Transverse colon (tissue), 4 donors: ENCODE measurements at regions of chr1 and their contacts with region 1.

Region 1: DNA sequence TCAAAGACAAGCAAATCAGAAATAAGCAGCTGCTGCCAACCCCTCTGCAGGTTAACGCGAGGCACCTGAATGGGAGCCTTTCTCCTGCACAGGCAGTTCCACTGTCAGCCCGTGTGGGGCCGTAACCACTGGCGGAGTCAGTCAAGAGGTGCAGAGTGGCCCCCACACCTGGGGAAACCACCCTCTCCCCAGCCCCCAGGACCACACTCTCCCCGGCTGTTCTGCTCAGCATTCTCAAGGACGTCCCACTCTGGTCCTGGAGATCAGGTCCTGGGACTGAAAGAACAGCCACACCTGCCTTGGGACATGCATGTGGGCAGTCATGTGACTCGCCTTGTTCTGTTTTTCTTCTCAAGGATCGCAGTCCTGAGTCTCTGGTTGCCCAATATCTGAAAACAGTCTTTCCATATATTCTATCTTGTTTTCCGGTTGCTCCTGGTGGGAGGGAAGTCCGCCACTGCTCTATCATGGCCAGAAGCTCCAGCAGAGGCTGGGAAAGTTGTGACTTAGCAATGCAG is 252.5 kb downstream of the PTPRU start:
- DNase-seq: no peak
- H3K4me3 ChIP-seq: no peak overlapping the region
- H3K27ac ChIP-seq: no peak overlapping the region
- H3K4me1 ChIP-seq: no peaks in the 10 kb centered on the region
- H3K27me3 ChIP-seq: no peaks in the 10 kb centered on the region
- CTCF ChIP-seq: no peak
- EP300 ChIP-seq: no peak
- POLR2A ChIP-seq: no peak

Region 2: GRCh38 chr1:29450591-29450990 is 38.3 kb before region 1 on chr1:
- in situ Hi-C with region 1: no loop called
- intact Hi-C with region 1: no loop called
- DNase-seq: no peak
- H3K4me3 ChIP-seq: no peak overlapping the region
- H3K27ac ChIP-seq: no peak overlapping the region
- H3K4me1 ChIP-seq: no peaks in the 10 kb centered on the region
- H3K27me3 ChIP-seq: peaks cover 10% of the 10 kb centered on the region
- CTCF ChIP-seq: no peak
- EP300 ChIP-seq: no peak
- POLR2A ChIP-seq: no peak

Region 3: GRCh38 chr1:29517251-29518086 is 28.6 kb after region 1 on chr1:
- in situ Hi-C with region 1: no loop called
- intact Hi-C with region 1: loop called (anchors 1 kb)
- DNase-seq: no peak
- H3K4me3 ChIP-seq: no peak overlapping the region
- H3K27ac ChIP-seq: no peak overlapping the region
- H3K4me1 ChIP-seq: no peaks in the 10 kb centered on the region
- H3K27me3 ChIP-seq: peaks cover 5% of the 10 kb centered on the region
- CTCF ChIP-seq: no peak
- EP300 ChIP-seq: no peak
- POLR2A ChIP-seq: no peak

Region 4: DNA sequence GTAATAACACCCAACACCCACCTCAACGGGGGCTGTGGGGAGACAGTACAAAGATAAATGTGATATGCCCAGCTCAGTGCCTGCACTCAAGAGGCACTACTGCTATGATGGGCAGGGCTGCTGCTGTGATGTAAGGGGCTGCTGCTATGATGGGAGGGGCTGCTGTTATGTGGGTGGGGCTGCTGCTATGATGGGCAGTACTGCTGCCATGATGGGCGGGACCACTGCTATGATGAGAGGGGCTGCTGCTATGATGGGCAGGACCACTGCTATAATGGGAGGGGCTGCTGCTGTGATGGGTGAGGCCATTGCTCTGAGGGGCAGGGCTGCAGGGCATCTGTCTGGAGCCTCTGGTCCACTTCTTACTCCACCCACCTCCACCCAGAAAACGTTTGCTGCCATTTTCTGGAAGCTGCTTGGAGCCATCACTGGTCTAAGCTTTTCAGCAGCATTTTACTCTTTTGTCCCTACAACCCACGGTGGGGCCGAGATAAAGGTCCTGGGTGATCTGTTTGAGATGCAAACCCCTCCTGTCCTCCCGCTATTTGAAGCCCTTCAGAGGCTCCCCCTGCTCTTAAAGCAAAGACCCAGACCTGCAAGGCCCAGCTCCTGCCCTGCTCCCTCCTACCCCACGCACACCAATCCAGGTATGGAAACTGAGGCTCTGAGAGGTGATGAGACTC is 404.3 kb after region 1 on chr1:
- in situ Hi-C with region 1: no loop called
- intact Hi-C with region 1: no loop called
- DNase-seq: no peak
- H3K4me3 ChIP-seq: no peak overlapping the region
- H3K27ac ChIP-seq: no peak overlapping the region
- H3K4me1 ChIP-seq: no peaks in the 10 kb centered on the region
- H3K27me3 ChIP-seq: peaks cover 34% of the 10 kb centered on the region
- CTCF ChIP-seq: no peak
- EP300 ChIP-seq: no peak
- POLR2A ChIP-seq: no peak